ENCODE measurements at regions of chr14 and their contacts with region 1.

Region 1: GRCh38 chr14:77053046-77053841 is 24.7 kb upstream of the IRF2BPL start:
- DNase-seq: peak; percentile 72 to 85 (median 72)
- H3K4me3 ChIP-seq: no peak overlapping the region
- H3K4me3 Mint-ChIP-seq: no peak overlapping the region
- H3K27ac ChIP-seq: no peak overlapping the region
- H3K27ac Mint-ChIP-seq: peak overlapping the region in 5 of 8 donors; percentile 24 to 51 (median 36)
- H3K4me1 ChIP-seq: peaks cover 9% of the 10 kb centered on the region
- H3K4me1 Mint-ChIP-seq: peaks cover 4 to 15% (median 14%) of the 10 kb centered on the region in 3 donors
- H3K27me3 ChIP-seq: no peaks in the 10 kb centered on the region
- H3K27me3 Mint-ChIP-seq: no peaks in the 10 kb centered on the region

Region 2: DNA sequence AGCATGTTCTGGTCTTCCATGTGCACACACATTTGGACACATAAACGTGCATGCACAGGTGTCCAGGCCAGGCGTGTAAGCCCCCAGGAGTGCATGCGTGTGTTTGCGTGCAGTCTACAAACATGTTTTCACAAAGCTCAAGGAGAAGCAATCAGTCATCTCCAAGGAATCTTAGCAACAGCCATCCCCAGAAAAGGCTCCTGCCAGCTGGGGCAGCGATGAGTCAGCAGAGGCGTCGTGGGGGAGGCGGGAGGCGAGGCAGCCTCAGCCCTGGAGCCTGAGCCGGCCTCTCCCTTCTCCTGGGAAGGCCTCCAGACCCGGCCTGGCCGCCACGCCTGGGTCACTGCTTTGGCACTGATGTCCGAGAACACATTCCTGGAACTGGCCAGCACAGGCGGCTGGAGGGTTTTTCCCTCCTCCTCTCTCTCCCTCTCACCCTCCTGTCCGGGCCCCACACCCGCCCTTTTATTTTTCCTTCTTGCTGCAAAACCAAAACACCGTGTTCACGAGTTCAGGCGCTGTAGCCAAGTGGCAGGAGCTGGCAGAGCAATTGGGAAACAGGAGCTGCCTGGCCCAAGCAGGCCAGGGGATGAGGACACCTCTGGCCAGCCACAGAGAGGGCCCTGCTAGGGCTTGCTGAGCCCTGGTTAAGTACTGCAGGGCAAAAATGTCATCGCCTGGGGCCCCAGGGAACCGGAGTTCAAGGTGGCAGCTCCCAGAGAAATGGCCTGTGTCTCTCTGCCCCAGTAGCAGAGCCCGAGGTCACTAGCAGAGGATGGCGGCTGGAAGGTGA is 134.3 kb before region 1 on chr14:
- CTCF ChIA-PET with region 1: interaction called, 136 read pairs
- POLR2A ChIA-PET with region 1: no interaction called
- DNase-seq: no peak
- H3K4me3 ChIP-seq: no peak overlapping the region
- H3K4me3 Mint-ChIP-seq: no peak overlapping the region
- H3K27ac ChIP-seq: no peak overlapping the region
- H3K27ac Mint-ChIP-seq: peak overlapping the region in 2 of 8 donors; percentile 50 to 58
- H3K4me1 ChIP-seq: peaks cover 17% of the 10 kb centered on the region
- H3K4me1 Mint-ChIP-seq: peaks cover 13 to 27% (median 24%) of the 10 kb centered on the region in 3 donors
- H3K27me3 ChIP-seq: no peaks in the 10 kb centered on the region
- H3K27me3 Mint-ChIP-seq: no peaks in the 10 kb centered on the region

Region 3: DNA sequence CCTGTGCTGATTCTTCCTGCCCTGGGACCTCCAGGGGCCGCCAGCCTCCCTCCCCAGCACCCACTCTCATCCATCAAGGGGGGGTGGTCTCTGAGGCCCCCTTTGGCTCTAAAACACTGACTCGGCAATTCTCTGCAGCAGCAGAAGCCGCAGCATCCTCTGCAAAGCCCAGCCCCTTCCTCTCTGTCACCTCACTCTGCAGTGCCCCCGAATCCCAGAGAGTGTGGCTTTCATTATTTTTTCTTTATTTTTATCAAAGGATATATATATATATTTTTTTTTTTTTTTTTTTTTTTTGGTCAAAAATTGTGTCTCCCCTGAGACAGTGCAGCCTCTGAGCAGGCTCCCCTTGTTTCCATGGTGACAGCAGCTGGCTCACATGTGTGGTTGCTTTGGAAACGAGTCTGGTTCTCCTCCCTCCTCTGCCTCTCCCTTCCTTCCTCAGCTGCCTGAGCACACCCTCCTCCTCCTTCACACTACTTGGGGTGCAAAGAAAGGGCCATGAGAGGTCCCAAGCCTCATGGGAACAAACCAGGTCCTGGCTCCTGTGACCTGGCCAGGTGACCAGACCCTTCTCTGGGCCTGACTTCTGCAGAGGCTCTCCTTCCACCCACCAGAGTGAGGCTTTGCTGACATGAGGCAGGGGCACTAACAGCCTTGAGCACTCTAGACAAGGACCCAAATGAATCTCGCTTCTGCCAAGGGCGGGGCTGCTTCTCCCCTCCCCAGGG is 126.6 kb before region 1 on chr14:
- CTCF ChIA-PET with region 1: interaction called, 136 read pairs
- POLR2A ChIA-PET with region 1: no interaction called
- DNase-seq: peak; percentile 46 to 84 (median 75)
- H3K4me3 ChIP-seq: peak overlapping the region; percentile 64
- H3K4me3 Mint-ChIP-seq: peak overlapping the region; percentile 73 to 85 (median 78)
- H3K27ac ChIP-seq: peak overlapping the region; percentile 53
- H3K27ac Mint-ChIP-seq: peak overlapping the region; percentile 83 to 96 (median 94)
- H3K4me1 ChIP-seq: peaks cover 53% of the 10 kb centered on the region
- H3K4me1 Mint-ChIP-seq: peaks cover 57 to 89% (median 72%) of the 10 kb centered on the region in 3 donors
- H3K27me3 ChIP-seq: no peaks in the 10 kb centered on the region
- H3K27me3 Mint-ChIP-seq: peaks cover 0 to 2% of the 10 kb centered on the region in 2 donors

Region 4: DNA sequence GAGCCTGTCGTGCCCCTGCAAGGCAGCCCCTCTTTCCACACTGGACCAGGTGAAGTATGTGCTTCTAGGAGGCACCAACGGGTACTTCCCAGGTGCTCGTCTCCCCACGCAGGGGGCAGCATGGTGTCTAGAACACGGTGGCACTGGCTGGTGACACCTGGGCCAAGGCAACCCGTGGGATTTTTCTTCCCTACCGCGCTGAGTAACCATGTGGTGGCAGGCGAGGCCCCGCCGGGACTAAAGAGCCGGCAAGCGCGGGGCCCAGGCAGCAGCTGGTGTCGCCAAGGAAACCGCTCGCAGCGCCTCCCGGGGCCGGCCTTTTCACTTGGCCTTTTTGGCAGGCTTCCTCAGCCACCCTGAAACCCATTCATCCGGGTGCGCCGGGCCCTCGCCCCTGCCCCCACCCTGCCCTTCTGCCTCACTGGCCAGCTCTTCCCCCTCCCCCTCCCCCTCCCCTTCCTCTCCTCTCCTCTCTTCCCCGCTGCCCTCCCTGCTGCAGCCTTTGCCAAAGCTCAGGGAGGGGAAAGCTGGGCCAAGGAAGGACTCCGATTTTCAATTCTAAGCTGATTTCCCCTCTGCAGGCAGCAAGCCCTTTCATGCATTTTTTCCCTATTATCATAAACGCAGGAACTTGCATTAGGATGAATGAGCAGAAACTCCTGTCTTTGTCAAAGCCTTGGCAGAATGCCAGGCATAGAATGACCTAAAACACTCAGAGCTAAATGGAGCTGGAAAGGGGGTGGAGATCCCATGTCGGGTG is 106.0 kb before region 1 on chr14:
- CTCF ChIA-PET with region 1: interaction called, 15 read pairs
- POLR2A ChIA-PET with region 1: no interaction called
- DNase-seq: peak; percentile 60 to 83 (median 66)
- H3K4me3 ChIP-seq: no peak overlapping the region
- H3K4me3 Mint-ChIP-seq: peak overlapping the region in 5 of 7 donors; percentile 12 to 47 (median 46)
- H3K27ac ChIP-seq: no peak overlapping the region
- H3K27ac Mint-ChIP-seq: peak overlapping the region; percentile 36 to 97 (median 76)
- H3K4me1 ChIP-seq: peaks cover 16% of the 10 kb centered on the region
- H3K4me1 Mint-ChIP-seq: peaks cover 16 to 29% (median 16%) of the 10 kb centered on the region in 3 donors
- H3K27me3 ChIP-seq: no peaks in the 10 kb centered on the region
- H3K27me3 Mint-ChIP-seq: peaks cover 0 to 1% of the 10 kb centered on the region in 2 donors

Region 5: DNA sequence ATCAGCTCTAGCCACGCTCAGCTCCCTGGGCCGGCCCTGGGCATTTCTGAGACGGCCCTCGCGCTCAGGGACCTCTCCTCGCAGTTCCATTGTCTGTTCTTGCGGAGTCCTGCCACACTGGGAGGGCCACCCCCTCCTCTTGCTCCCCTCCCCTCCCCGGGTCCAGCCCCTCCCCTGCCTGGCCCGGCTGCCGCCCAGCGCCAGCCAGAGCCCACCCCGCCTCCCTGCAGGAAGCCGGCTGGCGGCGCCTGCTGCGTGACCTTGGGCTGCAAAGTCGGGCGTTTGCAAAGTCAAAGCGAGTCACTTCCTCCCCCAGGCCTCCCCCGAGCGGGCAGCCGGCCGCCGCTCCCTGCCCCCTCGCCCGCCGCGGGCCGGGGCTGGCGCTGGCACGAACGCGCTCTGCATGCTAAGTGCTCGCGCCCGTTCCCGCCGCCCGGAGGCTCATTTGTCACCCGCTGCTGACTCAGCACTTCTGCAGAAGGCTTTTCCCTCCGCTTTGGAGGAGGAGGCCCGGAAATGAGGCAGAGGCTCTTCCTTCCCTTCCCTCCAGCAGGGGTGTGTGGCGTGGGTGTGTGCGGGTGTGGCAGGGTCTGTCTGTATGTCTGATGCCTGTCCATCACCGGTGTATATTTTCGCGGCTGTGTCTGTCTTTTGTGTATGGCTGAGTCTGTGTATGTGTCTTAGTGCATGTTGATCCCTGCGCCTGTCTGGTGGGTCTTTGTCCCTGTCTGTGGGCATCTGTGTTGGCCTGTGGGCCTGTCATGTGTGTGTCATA is 96.7 kb before region 1 on chr14:
- CTCF ChIA-PET with region 1: interaction called, 12 read pairs
- POLR2A ChIA-PET with region 1: no interaction called
- DNase-seq: peak; percentile 82 to 91 (median 87)
- H3K4me3 ChIP-seq: peak overlapping the region; percentile 50
- H3K4me3 Mint-ChIP-seq: peak overlapping the region; percentile 86 to 95 (median 87)
- H3K27ac ChIP-seq: peak overlapping the region; percentile 94
- H3K27ac Mint-ChIP-seq: peak overlapping the region; percentile 95 to 100 (median 99)
- H3K4me1 ChIP-seq: peaks cover 50% of the 10 kb centered on the region
- H3K4me1 Mint-ChIP-seq: peaks cover 59 to 74% (median 65%) of the 10 kb centered on the region in 3 donors
- H3K27me3 ChIP-seq: no peaks in the 10 kb centered on the region
- H3K27me3 Mint-ChIP-seq: peaks cover 0 to 1% of the 10 kb centered on the region in 2 donors

Region 6: DNA sequence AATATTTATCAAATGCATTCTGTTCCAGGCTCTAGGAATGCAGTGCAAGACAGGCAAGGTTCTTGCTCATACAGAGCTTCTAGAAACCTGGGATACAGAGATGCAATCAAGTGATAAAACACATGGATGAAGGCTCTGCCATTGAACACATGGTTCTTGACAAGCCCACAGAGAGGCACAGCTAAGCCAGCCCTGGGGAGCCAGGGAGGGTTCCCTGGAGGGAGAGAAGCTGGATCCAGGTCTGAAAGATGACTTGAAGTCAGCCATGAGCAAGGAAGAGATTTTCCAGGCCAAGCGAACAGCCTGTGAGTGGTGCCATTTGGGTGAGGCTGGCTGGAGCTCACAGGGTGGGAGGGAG is 91.0 kb before region 1 on chr14:
- CTCF ChIA-PET with region 1: interaction called, 12 read pairs
- POLR2A ChIA-PET with region 1: no interaction called
- DNase-seq: no peak
- H3K4me3 ChIP-seq: peak overlapping the region; percentile 60
- H3K4me3 Mint-ChIP-seq: peak overlapping the region; percentile 76 to 90 (median 81)
- H3K27ac ChIP-seq: peak overlapping the region; percentile 71
- H3K27ac Mint-ChIP-seq: peak overlapping the region; percentile 83 to 99 (median 94)
- H3K4me1 ChIP-seq: peaks cover 58% of the 10 kb centered on the region
- H3K4me1 Mint-ChIP-seq: peaks cover 71 to 81% (median 81%) of the 10 kb centered on the region in 3 donors
- H3K27me3 ChIP-seq: no peaks in the 10 kb centered on the region
- H3K27me3 Mint-ChIP-seq: no peaks in the 10 kb centered on the region

Region 7: GRCh38 chr14:77028384-77029231 is 24.6 kb before region 1 on chr14 and contains the start of gene IRF2BPL:
- CTCF ChIA-PET with region 1: interaction called, 29 read pairs
- POLR2A ChIA-PET with region 1: interaction called, 3 read pairs
- DNase-seq: peak; percentile 89 to 97 (median 93)
- H3K4me3 ChIP-seq: peak within 1 kb of the TSS; percentile 72
- H3K4me3 Mint-ChIP-seq: peak within 1 kb of the TSS; percentile 91 to 96 (median 94)
- H3K27ac ChIP-seq: peak within 1 kb of the TSS; percentile 87
- H3K27ac Mint-ChIP-seq: peak within 1 kb of the TSS; percentile 94 to 100 (median 98)
- H3K4me1 ChIP-seq: peaks cover 69% of the 10 kb centered on the region
- H3K4me1 Mint-ChIP-seq: peaks cover 51 to 69% (median 58%) of the 10 kb centered on the region in 3 donors
- H3K27me3 ChIP-seq: no peaks in the 10 kb centered on the region
- H3K27me3 Mint-ChIP-seq: peaks cover 0 to 3% of the 10 kb centered on the region in 2 donors
- total RNA-seq, gene IRF2BPL: 25.6 to 27.2 TPM

Measured in CD8-positive, alpha-beta memory T cell (primary cell).